Heart right ventricle (tissue), 16 donors: ENCODE measurements at regions of chr11 and their contacts with region 1.

Region 1: GRCh38 chr11:16605894-16606783 is 132.3 kb upstream of the C11orf58 start:
- DNase-seq: peak; percentile 90 to 94
- ATAC-seq: peak; percentile 51 to 80 (median 65)
- H3K4me3 ChIP-seq: peak overlapping the region; percentile 57 to 95 (median 84)
- H3K27ac ChIP-seq: peak overlapping the region; percentile 85 to 99 (median 98)
- H3K4me1 ChIP-seq: peaks cover 0 to 44% (median 14%) of the 10 kb centered on the region in 9 donors
- H3K27me3 ChIP-seq: peaks cover 0 to 100% (median 11%) of the 10 kb centered on the region in 7 donors
- CTCF ChIP-seq: peak; percentile 89 to 99 (median 97)

Region 2: GRCh38 chr11:15770798-15771414 is 835.2 kb before region 1 on chr11:
- intact Hi-C with region 1: loop called in 3 of 10 experiments (anchors 5 kb)
- DNase-seq: peak in 1 of 2 donors; percentile 52
- ATAC-seq: no peak
- H3K4me3 ChIP-seq: no peak overlapping the region
- H3K27ac ChIP-seq: no peak overlapping the region
- H3K4me1 ChIP-seq: peaks cover 0 to 27% (median 9%) of the 10 kb centered on the region in 9 donors
- H3K27me3 ChIP-seq: peaks cover 0 to 3% (median 0%) of the 10 kb centered on the region in 7 donors
- CTCF ChIP-seq: peak; percentile 28 to 76 (median 64)

Region 3: GRCh38 chr11:16037187-16037586 is 569.0 kb before region 1 on chr11:
- intact Hi-C with region 1: loop called in 2 of 10 experiments (anchors 5 to 10 kb)
- DNase-seq: no peak
- ATAC-seq: no peak
- H3K4me3 ChIP-seq: no peak overlapping the region
- H3K27ac ChIP-seq: no peak overlapping the region
- H3K4me1 ChIP-seq: peaks cover 0 to 8% (median 0%) of the 10 kb centered on the region in 9 donors
- H3K27me3 ChIP-seq: no peaks in the 10 kb centered on the region
- CTCF ChIP-seq: no peak

Region 4: GRCh38 chr11:16184588-16184987 is 421.6 kb before region 1 on chr11:
- intact Hi-C with region 1: loop called in 1 of 10 experiments (anchors 10 kb)
- DNase-seq: no peak
- ATAC-seq: no peak
- H3K4me3 ChIP-seq: no peak overlapping the region
- H3K27ac ChIP-seq: no peak overlapping the region
- H3K4me1 ChIP-seq: peaks cover 0 to 19% (median 0%) of the 10 kb centered on the region in 9 donors
- H3K27me3 ChIP-seq: no peaks in the 10 kb centered on the region
- CTCF ChIP-seq: no peak

Region 5: GRCh38 chr11:16239141-16240105 is 366.7 kb before region 1 on chr11:
- intact Hi-C with region 1: loop called in 4 of 10 experiments (anchors 2 to 10 kb)
- DNase-seq: no peak
- ATAC-seq: peak; percentile 42 to 89 (median 77)
- H3K4me3 ChIP-seq: peak overlapping the region in 5 of 10 donors; percentile 5 to 22 (median 12)
- H3K27ac ChIP-seq: peak overlapping the region in 9 of 10 donors; percentile 18 to 85 (median 67)
- H3K4me1 ChIP-seq: peaks cover 0 to 66% (median 30%) of the 10 kb centered on the region in 9 donors
- H3K27me3 ChIP-seq: no peaks in the 10 kb centered on the region
- CTCF ChIP-seq: no peak

Region 6: DNA sequence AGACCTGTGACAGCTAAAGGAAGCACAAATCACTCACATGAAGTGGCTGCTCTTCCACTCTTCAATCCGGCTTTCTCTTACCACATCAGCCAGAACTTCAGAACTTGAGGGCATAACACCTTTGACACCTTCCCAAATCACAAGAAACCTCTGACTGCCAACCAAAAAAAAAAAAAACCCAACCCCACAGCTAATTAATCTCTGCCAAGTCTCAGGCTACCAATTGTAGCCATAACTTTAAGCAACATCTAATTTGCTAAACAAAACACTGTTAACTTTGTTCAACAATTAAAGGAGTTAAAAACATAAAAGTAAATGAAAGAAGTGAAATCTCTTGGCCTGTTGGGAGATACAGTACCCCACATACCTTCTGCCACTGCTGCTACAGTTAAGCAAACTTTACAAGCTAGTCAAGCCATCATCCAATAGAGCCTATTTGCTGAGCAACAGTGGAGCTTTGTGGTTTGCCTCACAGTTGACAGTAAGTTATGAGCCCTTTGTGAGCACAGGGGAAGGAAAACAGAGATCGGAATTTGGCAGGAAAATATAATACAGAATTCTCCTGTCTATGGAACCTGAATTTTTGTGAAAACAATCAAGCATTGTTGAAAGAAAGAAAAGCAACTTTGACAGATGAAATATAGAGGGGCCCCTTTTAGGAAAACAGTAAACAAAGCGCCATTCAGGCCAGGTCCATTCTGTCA is 249.9 kb before region 1 on chr11 and contains the start of gene SOX6:
- intact Hi-C with region 1: loop called in 4 of 10 experiments (anchors 10 kb)
- DNase-seq: no peak
- ATAC-seq: peak in 6 of 8 donors; percentile 27 to 77 (median 70)
- H3K4me3 ChIP-seq: peak within 1 kb of the TSS in 4 of 10 donors; percentile 6 to 21 (median 8)
- H3K27ac ChIP-seq: peak within 1 kb of the TSS in 8 of 10 donors; percentile 13 to 79 (median 58)
- H3K4me1 ChIP-seq: peaks cover 0 to 57% (median 35%) of the 10 kb centered on the region in 9 donors
- H3K27me3 ChIP-seq: no peaks in the 10 kb centered on the region
- CTCF ChIP-seq: no peak
- total RNA-seq, gene SOX6: 12.6 to 43.0 (median 25.8) TPM